ENCODE measurements at regions of chr4 and their contacts with region 1.

Region 1: DNA sequence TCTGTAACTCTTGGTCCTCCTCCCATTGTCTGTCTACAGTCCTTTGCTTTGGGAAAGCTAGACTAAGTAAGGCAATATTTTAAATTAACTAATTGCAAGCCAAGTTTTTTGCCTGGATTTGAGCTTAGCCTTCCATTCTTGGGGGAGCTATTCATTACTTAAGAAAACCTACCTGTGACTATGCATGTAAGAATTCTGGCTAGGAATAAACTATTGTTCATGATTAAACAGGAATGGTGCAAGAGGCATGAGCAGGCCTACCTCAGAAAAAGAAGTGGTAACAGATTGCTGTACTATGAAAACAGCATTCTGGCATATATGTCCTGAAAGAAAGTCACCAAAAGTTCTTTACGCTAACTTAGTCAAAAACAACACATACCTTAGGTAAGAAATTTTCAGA is 309.3 kb downstream of the MAPK10 start:
- DNase-seq: no peak
- H3K4me3 Mint-ChIP-seq: no peak overlapping the region
- H3K27ac Mint-ChIP-seq: no peak overlapping the region
- H3K4me1 Mint-ChIP-seq: no peaks in the 10 kb centered on the region
- H3K27me3 Mint-ChIP-seq: no peaks in the 10 kb centered on the region
- CTCF ChIP-seq: no peak

Region 2: DNA sequence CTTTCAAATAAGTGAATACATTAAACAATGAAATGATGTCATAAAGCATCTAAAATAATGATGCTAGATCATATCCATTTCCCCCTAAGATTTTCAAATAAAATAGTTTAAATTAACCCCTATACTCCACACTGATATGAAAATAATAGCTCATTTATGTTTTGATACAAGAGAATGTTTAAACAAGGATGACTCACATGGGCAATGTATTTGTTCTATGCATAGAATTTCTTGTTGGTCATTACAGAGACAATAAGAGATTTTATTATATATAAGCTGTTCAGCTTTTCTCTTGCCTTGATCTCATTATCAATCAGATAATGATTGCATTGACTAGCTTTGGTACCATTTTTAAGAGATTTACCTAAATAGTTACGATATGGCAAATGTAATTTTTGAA is 163.9 kb before region 1 on chr4:
- CTCF ChIA-PET with region 1: no interaction called
- POLR2A ChIA-PET with region 1: no interaction called
- intact Hi-C with region 1: no loop called
- DNase-seq: no peak
- H3K4me3 Mint-ChIP-seq: no peak overlapping the region
- H3K27ac Mint-ChIP-seq: no peak overlapping the region
- H3K4me1 Mint-ChIP-seq: no peaks in the 10 kb centered on the region
- H3K27me3 Mint-ChIP-seq: no peaks in the 10 kb centered on the region
- CTCF ChIP-seq: no peak

Region 3: DNA sequence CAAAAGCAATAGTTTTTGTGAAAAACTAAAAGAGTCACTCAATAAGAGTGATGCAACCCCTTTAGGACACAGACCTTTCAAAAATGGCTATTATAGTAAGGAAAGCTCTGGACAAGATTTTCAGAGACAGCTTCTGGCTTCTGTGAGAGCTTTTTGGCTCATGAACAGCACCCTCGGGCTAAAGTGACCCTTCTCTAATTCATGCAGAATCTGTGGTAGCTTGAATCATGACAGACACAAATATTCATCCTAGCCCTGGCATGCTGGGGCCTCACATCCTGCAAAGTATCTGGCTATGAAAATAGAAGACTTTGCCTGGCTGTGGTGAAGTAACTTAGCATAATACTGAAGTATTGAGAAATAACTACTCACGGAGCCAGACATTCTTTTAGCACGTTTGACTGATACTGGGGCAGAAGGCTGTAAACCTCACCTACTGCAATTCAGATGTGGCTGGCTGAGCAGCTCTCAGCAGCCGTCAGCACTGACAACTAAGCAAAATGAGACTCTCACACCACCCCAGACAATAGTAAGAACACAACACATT is 18.0 kb before region 1 on chr4:
- CTCF ChIA-PET with region 1: interaction called, 5 read pairs
- POLR2A ChIA-PET with region 1: interaction called, 12 read pairs
- intact Hi-C with region 1: no loop called
- DNase-seq: peak; percentile 96
- H3K4me3 Mint-ChIP-seq: peak overlapping the region; percentile 49
- H3K27ac Mint-ChIP-seq: peak overlapping the region; percentile 81
- H3K4me1 Mint-ChIP-seq: peaks cover 43% of the 10 kb centered on the region
- H3K27me3 Mint-ChIP-seq: no peaks in the 10 kb centered on the region
- CTCF ChIP-seq: no peak